ENCODE measurements at regions of chr10 and their contacts with region 1.

Region 1: GRCh38 chr10:119445311-119445934 is 97.1 kb downstream of the RGS10 start:
- DNase-seq: peak; percentile 58 to 72
- H3K4me3 ChIP-seq: no peak overlapping the region
- H3K27ac ChIP-seq: no peak overlapping the region
- H3K4me1 ChIP-seq: peaks cover 15% of the 10 kb centered on the region
- H3K27me3 ChIP-seq: no peaks in the 10 kb centered on the region
- CTCF ChIP-seq: peak; percentile 86

Region 2: GRCh38 chr10:119461380-119461779 is 16.0 kb after region 1 on chr10:
- CTCF ChIA-PET with region 1: interaction called, 3 read pairs
- POLR2A ChIA-PET with region 1: no interaction called
- intact Hi-C with region 1: loop called (anchors 1 kb)
- DNase-seq: peak; percentile 77 to 92
- H3K4me3 ChIP-seq: peak overlapping the region; percentile 13; the same call in 1 of the 2 replicates
- H3K27ac ChIP-seq: peak overlapping the region; percentile 90
- H3K4me1 ChIP-seq: peaks cover 41% of the 10 kb centered on the region
- H3K27me3 ChIP-seq: no peaks in the 10 kb centered on the region
- CTCF ChIP-seq: no peak

Region 3: GRCh38 chr10:119489991-119490326 is 44.5 kb after region 1 on chr10:
- CTCF ChIA-PET with region 1: interaction called, 6 read pairs
- POLR2A ChIA-PET with region 1: no interaction called
- intact Hi-C with region 1: loop called (anchors 1 kb)
- DNase-seq: no peak
- H3K4me3 ChIP-seq: no peak overlapping the region; the same call in 1 of the 2 replicates
- H3K27ac ChIP-seq: no peak overlapping the region
- H3K4me1 ChIP-seq: peaks cover 3% of the 10 kb centered on the region
- H3K27me3 ChIP-seq: no peaks in the 10 kb centered on the region
- CTCF ChIP-seq: peak; percentile 24; the same call in 1 of the 2 replicates

Region 4: GRCh38 chr10:119517235-119518141 is 72.1 kb after region 1 on chr10:
- CTCF ChIA-PET with region 1: no interaction called
- POLR2A ChIA-PET with region 1: no interaction called
- intact Hi-C with region 1: loop called (anchors 2 kb)
- DNase-seq: no peak
- H3K4me3 ChIP-seq: no peak overlapping the region
- H3K27ac ChIP-seq: peak overlapping the region; percentile 77
- H3K4me1 ChIP-seq: peaks cover 29% of the 10 kb centered on the region
- H3K27me3 ChIP-seq: no peaks in the 10 kb centered on the region
- CTCF ChIP-seq: no peak

Region 5: DNA sequence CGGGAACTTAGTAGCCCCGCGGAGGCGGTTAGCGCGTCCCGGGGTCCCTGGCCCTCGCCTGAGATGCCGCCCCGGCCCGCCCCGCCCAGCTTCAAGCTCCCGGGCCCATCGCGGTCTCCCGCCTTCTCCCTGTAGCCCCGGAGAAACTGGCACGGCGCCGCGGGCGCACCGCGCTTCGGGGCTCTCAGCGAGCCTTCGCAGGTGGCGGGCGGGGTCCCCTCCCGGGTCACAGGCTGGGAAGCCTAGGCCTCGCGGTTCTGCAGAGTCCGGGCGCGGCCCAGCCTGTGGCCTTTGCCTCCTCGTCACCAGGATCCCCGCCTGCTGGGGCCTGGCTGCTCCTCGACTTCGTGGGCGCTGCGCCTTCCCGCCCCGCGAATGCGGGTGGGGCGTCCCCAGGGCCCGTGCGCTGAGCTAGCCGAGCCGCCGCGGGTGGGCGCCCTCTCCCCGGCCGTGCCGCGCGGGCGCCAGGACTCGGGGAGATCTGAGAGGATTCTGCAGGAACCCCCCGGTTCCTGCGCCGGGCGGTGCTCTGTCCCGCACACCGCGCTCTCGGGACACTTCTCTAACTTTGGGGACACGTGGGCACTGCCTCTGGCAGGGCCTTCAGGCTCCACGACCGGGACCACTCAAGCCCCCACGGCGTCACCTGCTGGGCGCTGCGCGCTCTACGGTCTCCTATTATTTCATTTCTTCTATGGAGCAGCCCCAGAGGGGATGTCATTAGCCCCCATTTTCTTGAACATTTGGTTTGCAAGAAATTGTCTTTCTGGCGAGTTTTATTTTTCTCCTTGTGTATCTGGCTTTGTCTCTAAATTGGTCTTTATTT is 97.8 kb after region 1 on chr10:
- CTCF ChIA-PET with region 1: no interaction called
- POLR2A ChIA-PET with region 1: no interaction called
- intact Hi-C with region 1: loop called (anchors 2 kb)
- DNase-seq: peak; percentile 35 to 44
- H3K4me3 ChIP-seq: peak overlapping the region; percentile 77
- H3K27ac ChIP-seq: peak overlapping the region; percentile 32
- H3K4me1 ChIP-seq: peaks cover 31% of the 10 kb centered on the region
- H3K27me3 ChIP-seq: no peaks in the 10 kb centered on the region
- CTCF ChIP-seq: peak; percentile 62

Measured in PC-9 (cell line).